IMR-90 (cell line): ENCODE measurements at regions of chr19 and their contacts with region 1.

Region 1: GRCh38 chr19:16751733-16752132 is 32.1 kb downstream of the NWD1 start:
- DNase-seq: no peak
- ATAC-seq: no peak
- H3K4me3 ChIP-seq: no peak overlapping the region
- H3K27ac ChIP-seq: no peak overlapping the region
- H3K4me1 ChIP-seq: no peaks in the 10 kb centered on the region
- H3K27me3 ChIP-seq: peaks cover 1% of the 10 kb centered on the region; the same call in 1 of the 2 replicates
- CTCF ChIP-seq: no peak
- POLR2A ChIP-seq: no peak
- RAD21 ChIP-seq: no peak

Region 2: GRCh38 chr19:16714702-16715287 is 36.9 kb before region 1 on chr19:
- CTCF ChIA-PET with region 1: no interaction called
- POLR2A ChIA-PET with region 1: no interaction called
- dilution Hi-C with region 1: no loop called
- in situ Hi-C with region 1: no loop called
- intact Hi-C with region 1: loop called (anchors 1 kb)
- DNase-seq: peak; percentile 24
- ATAC-seq: peak; percentile 82
- H3K4me3 ChIP-seq: no peak overlapping the region
- H3K27ac ChIP-seq: no peak overlapping the region
- H3K4me1 ChIP-seq: no peaks in the 10 kb centered on the region
- H3K27me3 ChIP-seq: peaks cover 3% of the 10 kb centered on the region; the same call in 1 of the 2 replicates
- CTCF ChIP-seq: peak; percentile 71
- POLR2A ChIP-seq: no peak
- RAD21 ChIP-seq: peak; percentile 77